ENCODE measurements at regions of chr12 and their contacts with region 1.

Region 1: DNA sequence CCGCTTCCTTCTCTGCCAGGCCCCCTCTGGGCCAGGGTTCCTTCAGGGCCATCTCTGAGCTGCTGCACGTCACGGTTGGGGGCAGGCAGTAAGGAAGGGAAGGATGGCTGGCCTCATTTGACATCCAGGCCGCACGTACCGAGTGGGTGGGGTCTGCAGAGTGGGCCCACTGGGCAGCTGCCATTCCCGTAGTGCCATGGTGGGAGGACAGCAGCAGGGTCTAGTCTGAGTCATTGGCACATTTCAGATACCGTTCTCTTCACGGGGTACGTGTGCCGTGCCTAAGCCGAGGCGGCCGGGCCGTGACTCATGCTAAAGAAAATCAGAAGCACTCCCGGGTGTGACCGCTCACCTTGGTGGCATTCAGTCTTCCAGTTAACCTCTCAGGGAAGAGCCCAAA is 43.9 kb downstream of the IL31 start:
- DNase-seq: peak in 2 of 10 donors; percentile 42 to 66
- H3K4me3 ChIP-seq: no peak overlapping the region
- H3K27ac ChIP-seq: peak overlapping the region in 12 of 59 donors; percentile 1 to 65 (median 26)
- H3K27me3 ChIP-seq: no peaks in the 10 kb centered on the region
- CTCF ChIP-seq: no peak

Region 2: GRCh38 chr12:122013791-122014590 is 116.2 kb before region 1 on chr12:
- intact Hi-C with region 1: no loop called
- DNase-seq: peak in 1 of 10 donors; percentile 68
- H3K4me3 ChIP-seq: no peak overlapping the region
- H3K27ac ChIP-seq: peak overlapping the region in 4 of 59 donors; percentile 18 to 40 (median 31)
- H3K27me3 ChIP-seq: no peaks in the 10 kb centered on the region
- CTCF ChIP-seq: no peak

Region 3: DNA sequence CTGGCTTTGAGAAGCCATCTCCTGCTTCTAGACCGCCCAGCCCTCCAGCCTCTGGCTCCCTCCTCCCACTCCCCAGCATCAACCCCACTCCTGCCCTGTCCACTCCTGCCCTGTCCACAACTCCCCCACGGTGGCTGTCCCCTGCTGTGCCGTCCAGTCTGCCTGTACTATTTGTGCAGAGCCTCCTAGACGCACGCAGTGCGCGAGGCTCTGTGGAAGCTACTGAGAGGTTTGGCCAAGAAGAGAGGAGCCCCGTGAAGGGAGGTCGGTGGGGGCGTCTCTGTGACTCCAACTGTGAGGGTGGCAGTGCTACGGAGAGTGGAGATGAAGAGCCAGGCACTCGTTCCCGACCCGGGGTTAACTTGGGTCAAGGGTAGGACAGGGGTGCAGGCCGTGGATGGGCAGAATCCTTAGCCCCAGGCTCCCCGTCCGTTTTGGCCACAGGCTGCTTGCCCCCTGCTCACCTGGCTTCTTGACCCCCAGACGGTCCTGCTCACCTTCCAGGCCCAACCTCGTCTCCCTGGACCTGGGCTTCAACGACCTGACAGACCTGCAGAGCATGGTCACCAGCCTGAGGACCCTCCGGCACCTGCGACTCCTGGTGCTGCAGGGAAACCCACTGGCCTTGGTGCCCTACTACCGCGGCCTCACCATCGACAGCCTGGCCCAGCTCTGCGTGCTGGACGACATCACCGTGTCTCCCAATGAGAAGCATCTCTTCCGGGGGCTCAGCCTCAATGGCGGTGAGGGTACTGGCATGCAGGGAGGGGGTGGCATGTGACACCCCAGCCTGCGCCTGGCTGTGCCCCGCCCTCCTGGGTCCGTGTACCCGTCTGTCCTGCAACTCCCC is 59.7 kb after region 1 on chr12:
- intact Hi-C with region 1: loop called in 1 of 2 experiments (anchors 5 kb)
- DNase-seq: no peak
- H3K4me3 ChIP-seq: no peak overlapping the region
- H3K27ac ChIP-seq: no peak overlapping the region
- H3K27me3 ChIP-seq: no peaks in the 10 kb centered on the region
- CTCF ChIP-seq: no peak

Region 4: DNA sequence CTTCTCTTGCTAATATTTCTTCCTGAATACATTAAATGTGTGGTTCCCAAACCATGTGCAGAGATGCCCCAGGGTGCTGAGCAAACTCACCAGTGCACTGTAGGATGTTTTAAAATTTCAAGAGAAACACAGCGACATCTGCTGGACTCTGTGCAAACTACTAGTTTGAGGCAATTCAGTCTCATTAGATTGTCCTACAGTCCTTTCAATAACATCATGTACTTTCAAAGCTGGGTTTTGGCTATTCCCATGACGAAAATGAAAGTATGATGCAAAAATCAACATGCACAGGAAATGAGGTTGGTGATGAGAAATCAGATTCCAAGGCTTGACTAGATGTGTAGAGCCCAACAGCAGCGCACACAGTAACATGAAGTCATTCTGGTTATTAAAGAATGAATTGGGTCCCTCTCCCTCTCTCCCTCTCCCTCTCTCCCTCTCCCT is 226.1 kb after region 1 on chr12:
- intact Hi-C with region 1: loop called in 1 of 2 experiments (anchors 2 kb)
- DNase-seq: peak in 4 of 10 donors; percentile 23 to 75 (median 44)
- H3K4me3 ChIP-seq: no peak overlapping the region
- H3K27ac ChIP-seq: peak overlapping the region in 37 of 59 donors; percentile 11 to 85 (median 61)
- H3K27me3 ChIP-seq: no peaks in the 10 kb centered on the region
- CTCF ChIP-seq: peak; percentile 64 to 90 (median 81)

Measured in dorsolateral prefrontal cortex (tissue), 120 donors.